Head of caudate nucleus (tissue), 42 donors: ENCODE measurements at regions of chr19 and their contacts with region 1.

Region 1: DNA sequence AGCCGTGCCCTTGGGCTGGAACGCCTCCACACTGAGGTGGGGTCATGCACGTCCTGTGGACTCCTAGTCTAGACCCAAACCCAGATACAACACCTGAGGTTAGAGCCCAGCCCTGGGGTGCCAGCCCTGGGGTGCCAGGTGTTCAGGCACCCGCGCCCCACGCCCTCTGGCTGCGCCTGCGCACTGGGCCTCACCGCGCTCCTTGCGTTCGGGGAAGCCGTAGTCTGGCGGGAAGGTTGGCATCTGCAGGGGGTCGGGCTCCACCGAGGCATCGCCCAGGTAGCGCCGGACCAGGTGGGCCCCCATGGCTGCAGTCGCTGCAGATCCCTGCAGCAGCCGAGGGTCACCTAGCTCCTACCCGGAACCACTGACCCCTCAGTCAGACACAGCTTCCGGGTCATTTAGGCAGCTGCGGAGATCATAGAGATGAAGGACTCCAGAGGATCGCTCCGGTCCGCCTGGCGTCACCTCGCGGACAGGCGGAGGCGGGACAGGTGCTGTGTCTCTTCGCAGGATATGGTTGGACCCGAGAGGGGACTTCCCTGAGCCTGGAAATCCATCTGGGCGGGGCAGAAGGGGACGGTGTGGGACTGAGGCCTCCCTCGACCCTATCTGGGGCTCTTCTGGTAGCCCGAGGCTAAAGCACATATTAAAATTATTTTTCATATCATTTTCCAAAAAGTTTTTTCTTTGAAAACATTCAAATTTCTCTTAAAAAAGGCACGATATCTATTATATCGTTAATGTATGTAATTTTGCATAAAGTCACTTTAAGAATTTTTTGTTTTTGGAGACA is at the start of gene NDUFB7:
- DNase-seq: peak; percentile 90 to 98 (median 95)

Region 2: DNA sequence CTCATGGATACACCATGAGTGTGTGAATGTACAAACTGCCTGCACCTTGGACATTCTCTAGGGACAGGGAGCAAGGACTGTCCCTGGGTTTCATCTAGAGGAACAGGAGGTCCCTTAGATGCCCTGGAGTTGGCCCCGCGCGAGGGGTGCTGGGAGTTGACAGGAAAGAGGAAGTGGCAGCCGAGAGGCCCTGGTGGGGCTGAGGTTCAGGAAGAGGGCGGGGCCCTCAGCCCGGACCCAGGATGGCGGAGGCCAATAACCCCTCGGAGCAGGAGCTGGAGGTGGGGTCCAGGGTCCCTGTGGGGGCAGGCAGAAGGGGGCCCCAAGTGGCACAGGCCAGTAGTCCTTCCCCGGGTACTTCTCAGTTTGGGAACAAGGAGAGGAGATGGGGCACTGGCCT is 131.8 kb before region 1 on chr19:
- intact Hi-C with region 1: no loop called
- DNase-seq: peak in 35 of 42 donors; percentile 28 to 77 (median 56)

Region 3: GRCh38 chr19:14689598-14690503 is 118.0 kb after region 1 on chr19 and contains the start of gene ZNF333:
- intact Hi-C with region 1: loop called (anchors 5 kb)
- DNase-seq: peak; percentile 95 to 99 (median 98)

Region 4: GRCh38 chr19:14889994-14890642 is 318.2 kb after region 1 on chr19:
- intact Hi-C with region 1: loop called (anchors 10 kb)
- DNase-seq: no peak